ENCODE measurements at regions of chr3 and their contacts with region 1.

Region 1: DNA sequence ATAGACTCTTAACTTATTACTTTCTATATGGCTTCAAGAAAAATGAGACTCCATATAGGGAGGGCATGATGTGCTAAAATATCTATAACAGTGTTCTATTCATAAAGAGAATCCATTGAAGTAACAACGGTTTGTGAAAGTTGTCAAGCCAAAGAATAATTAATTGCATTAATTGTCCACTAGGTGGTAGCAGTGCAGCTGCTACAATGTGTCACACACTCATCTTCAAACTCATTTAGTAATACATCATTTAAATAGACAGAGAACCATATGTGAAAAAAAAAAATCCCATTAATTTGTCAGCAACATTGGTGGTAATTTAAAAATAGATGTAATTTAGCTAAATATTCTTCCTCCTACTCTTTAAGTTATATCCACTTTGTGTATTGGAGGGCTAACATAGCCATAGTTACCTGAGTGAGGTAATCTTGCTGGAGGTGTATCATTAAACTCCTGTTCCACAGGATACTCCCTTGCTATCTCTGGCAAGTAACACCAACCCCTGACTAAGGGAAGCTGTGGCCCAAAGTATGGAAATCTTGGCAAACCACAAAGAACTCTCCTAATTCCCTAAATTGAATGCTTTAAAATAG is 3.7 kb upstream of the CPA3 start:
- DNase-seq: peak in 3 of 42 donors; percentile 11 to 40 (median 14)

Region 2: GRCh38 chr3:147773116-147773630 is 1088.2 kb before region 1 on chr3:
- intact Hi-C with region 1: no loop called
- DNase-seq: no peak

Region 3: DNA sequence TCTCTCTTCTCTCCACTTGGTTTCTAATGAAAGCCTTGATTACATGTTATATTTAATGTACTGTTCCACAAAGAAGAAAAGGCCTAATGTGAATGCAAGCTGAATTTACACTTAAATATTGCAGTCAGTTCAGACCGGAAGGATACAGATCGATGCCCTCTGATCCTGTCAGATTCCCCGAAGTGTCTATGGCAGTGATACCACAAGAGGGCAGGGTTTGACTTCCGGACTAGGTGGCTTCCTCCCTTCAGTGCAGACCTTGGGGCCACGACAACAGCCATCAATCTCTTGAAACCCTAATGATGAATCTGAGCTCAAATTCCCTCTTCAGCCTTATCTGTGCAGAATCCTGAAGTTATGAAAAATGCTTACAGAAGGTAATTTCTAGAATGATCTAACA is 134.1 kb before region 1 on chr3:
- intact Hi-C with region 1: loop called (anchors 10 kb)
- DNase-seq: peak; percentile 60 to 92 (median 78)

Region 4: GRCh38 chr3:148789146-148789545 is 72.2 kb before region 1 on chr3:
- intact Hi-C with region 1: no loop called
- DNase-seq: no peak

Region 5: GRCh38 chr3:148943506-148944205 is 82.3 kb after region 1 on chr3:
- intact Hi-C with region 1: loop called (anchors 5 kb)
- DNase-seq: peak in 15 of 42 donors; percentile 25 to 79 (median 60)

Measured in head of caudate nucleus (tissue), 42 donors.